CD4-positive, alpha-beta T cell (primary cell): ENCODE measurements at regions of chr21 and their contacts with region 1.

Region 1: DNA sequence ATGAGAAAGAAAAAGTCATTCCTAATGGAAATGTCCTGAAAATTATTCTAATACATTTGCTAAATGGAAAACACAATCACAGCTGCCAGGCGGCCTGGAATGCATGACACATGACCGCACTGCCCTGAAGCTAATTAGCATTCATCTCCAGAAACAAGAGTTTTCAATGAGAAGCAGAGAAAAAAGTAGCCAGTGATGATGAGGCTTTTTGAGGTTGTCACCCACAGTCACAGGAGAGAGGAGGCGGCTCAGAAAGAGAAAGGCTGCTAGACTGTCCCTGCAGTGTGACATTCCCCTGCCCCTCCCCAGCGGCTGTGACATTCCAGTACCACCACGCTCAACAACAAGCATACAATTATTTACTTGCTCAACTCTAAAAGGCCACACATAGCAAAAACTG is 122.9 kb upstream of the KRTAP19-8 start:
- DNase-seq: peak in 3 of 14 experiments; percentile 25 to 35 (median 30)
- ATAC-seq: peak; percentile 42
- H3K4me3 ChIP-seq: no peak overlapping the region
- H3K4me3 Mint-ChIP-seq: peak overlapping the region; percentile 70
- H3K27ac ChIP-seq: peak overlapping the region; percentile 30 to 72
- H3K27ac Mint-ChIP-seq: peak overlapping the region; percentile 86
- H3K4me1 ChIP-seq: peaks cover 57% of the 10 kb centered on the region
- H3K4me1 Mint-ChIP-seq: peaks cover 93% of the 10 kb centered on the region
- H3K27me3 ChIP-seq: no peaks in the 10 kb centered on the region
- H3K27me3 Mint-ChIP-seq: no peaks in the 10 kb centered on the region
- CTCF ChIP-seq: no peak

Region 2: GRCh38 chr21:31132574-31133242 is 28.4 kb before region 1 on chr21:
- CTCF ChIA-PET with region 1: interaction called, 3 read pairs
- POLR2A ChIA-PET with region 1: interaction called, 100 read pairs
- intact Hi-C with region 1: no loop called
- DNase-seq: peak; percentile 52 to 92 (median 71)
- ATAC-seq: peak; percentile 91
- H3K4me3 ChIP-seq: peak overlapping the region; percentile 35
- H3K4me3 Mint-ChIP-seq: peak overlapping the region; percentile 68
- H3K27ac ChIP-seq: peak overlapping the region in 1 of 2 donors; percentile 43
- H3K27ac Mint-ChIP-seq: peak overlapping the region; percentile 79
- H3K4me1 ChIP-seq: peaks cover 33% of the 10 kb centered on the region
- H3K4me1 Mint-ChIP-seq: peaks cover 64% of the 10 kb centered on the region
- H3K27me3 ChIP-seq: no peaks in the 10 kb centered on the region
- H3K27me3 Mint-ChIP-seq: no peaks in the 10 kb centered on the region
- CTCF ChIP-seq: no peak

Region 3: GRCh38 chr21:31142600-31142999 is 18.6 kb before region 1 on chr21:
- CTCF ChIA-PET with region 1: interaction called, 5 read pairs
- POLR2A ChIA-PET with region 1: interaction called, 100 read pairs
- intact Hi-C with region 1: loop called in 1 of 2 experiments (anchors 2 kb)
- DNase-seq: peak in 13 of 14 experiments; percentile 23 to 71 (median 48)
- ATAC-seq: peak; percentile 97
- H3K4me3 ChIP-seq: no peak overlapping the region
- H3K4me3 Mint-ChIP-seq: no peak overlapping the region
- H3K27ac ChIP-seq: no peak overlapping the region
- H3K27ac Mint-ChIP-seq: no peak overlapping the region
- H3K4me1 ChIP-seq: peaks cover 18% of the 10 kb centered on the region
- H3K4me1 Mint-ChIP-seq: peaks cover 50% of the 10 kb centered on the region
- H3K27me3 ChIP-seq: no peaks in the 10 kb centered on the region
- H3K27me3 Mint-ChIP-seq: no peaks in the 10 kb centered on the region
- CTCF ChIP-seq: peak; percentile 52

Region 4: DNA sequence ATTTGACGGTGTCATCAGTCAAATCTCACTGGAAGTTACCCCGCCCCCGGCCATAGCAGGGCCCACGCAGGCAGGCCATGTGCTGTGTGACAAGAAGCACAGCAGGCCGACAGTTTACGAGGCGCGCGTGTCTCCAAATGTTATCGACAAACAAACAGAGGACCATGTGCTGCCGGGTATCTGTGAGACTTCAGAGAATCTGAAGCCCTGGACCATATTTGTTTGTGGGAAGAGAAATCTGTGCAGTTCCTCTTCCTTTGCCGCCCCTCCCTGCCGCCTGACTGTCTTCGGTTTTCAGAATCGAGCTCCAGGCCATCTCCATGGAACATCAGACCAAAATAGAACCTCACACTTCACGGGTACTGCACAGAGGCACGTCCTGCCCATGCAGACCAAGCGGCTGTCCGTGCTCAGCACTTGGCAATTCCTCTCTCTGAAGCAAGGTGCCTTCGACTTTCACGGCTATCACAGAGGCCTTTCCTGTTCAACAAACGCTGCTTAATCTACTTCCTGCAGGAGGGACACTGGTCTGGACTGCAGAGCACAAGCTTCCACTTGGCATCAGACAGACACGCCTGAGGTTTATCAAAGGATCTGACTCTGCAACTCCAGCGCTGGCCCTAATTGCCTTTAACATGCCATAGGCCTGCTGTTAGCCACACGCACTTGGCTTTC is 12.9 kb after region 1 on chr21:
- CTCF ChIA-PET with region 1: interaction called, 11 read pairs
- POLR2A ChIA-PET with region 1: interaction called, 34 read pairs
- intact Hi-C with region 1: no loop called
- DNase-seq: peak in 12 of 14 experiments; percentile 39 to 68 (median 50)
- ATAC-seq: peak; percentile 64
- H3K4me3 ChIP-seq: peak overlapping the region; percentile 22
- H3K4me3 Mint-ChIP-seq: peak overlapping the region; percentile 81
- H3K27ac ChIP-seq: no peak overlapping the region
- H3K27ac Mint-ChIP-seq: peak overlapping the region; percentile 86
- H3K4me1 ChIP-seq: peaks cover 70% of the 10 kb centered on the region
- H3K4me1 Mint-ChIP-seq: peaks cover 92% of the 10 kb centered on the region
- H3K27me3 ChIP-seq: no peaks in the 10 kb centered on the region
- H3K27me3 Mint-ChIP-seq: no peaks in the 10 kb centered on the region
- CTCF ChIP-seq: no peak

Region 5: DNA sequence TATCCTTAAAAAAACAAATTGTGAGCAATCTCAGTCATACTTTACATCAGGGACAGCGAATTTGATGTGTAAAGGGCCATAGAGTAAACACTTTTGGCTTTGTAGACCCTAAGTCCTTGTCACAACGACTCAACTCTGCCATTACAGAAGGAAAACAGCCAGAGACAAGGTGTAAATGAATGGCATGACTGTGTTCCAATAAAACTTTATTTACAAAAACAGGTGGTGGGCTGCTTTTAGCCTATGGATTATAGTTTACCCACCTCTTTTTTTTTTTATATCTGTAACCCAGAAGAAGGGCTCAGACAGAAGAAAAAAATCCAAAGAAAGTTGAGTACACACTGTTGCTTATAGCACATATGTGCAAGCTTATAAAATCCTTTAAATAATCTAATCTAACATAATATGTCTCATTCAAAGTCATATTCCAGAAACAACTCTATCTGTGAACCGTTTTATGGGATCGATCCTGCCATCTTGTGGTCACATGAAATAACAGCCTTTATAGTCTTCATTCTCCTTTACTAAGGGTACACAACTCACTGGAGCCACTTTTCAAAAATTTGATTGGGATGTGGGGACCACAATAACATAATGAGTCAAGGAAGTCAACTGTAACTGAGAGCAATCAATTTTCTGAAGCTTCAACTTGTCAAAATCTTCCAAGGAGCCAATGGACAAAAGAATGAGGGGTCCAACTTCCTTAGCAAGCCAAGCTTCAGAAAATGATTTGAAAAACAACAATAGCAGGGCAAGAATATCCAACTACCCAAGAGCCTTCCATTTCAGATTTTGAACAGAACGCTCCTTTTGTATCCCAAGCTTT is 19.3 kb after region 1 on chr21:
- CTCF ChIA-PET with region 1: interaction called, 9 read pairs
- POLR2A ChIA-PET with region 1: interaction called, 46 read pairs
- intact Hi-C with region 1: loop called in 1 of 2 experiments (anchors 1 kb)
- DNase-seq: peak in 4 of 14 experiments; percentile 53 to 78 (median 68)
- ATAC-seq: no peak
- H3K4me3 ChIP-seq: peak overlapping the region; percentile 46
- H3K4me3 Mint-ChIP-seq: peak overlapping the region; percentile 89
- H3K27ac ChIP-seq: peak overlapping the region; percentile 39 to 89
- H3K27ac Mint-ChIP-seq: peak overlapping the region; percentile 99
- H3K4me1 ChIP-seq: peaks cover 92% of the 10 kb centered on the region
- H3K4me1 Mint-ChIP-seq: peaks cover 79% of the 10 kb centered on the region
- H3K27me3 ChIP-seq: no peaks in the 10 kb centered on the region
- H3K27me3 Mint-ChIP-seq: no peaks in the 10 kb centered on the region
- CTCF ChIP-seq: peak; percentile 65

Region 6: GRCh38 chr21:31185663-31186062 is 24.5 kb after region 1 on chr21:
- CTCF ChIA-PET with region 1: interaction called, 6 read pairs
- POLR2A ChIA-PET with region 1: interaction called, 46 read pairs
- intact Hi-C with region 1: loop called in 1 of 2 experiments (anchors 1 kb)
- DNase-seq: peak in 6 of 14 experiments; percentile 22 to 66 (median 50)
- ATAC-seq: peak; percentile 27
- H3K4me3 ChIP-seq: peak overlapping the region; percentile 56
- H3K4me3 Mint-ChIP-seq: peak overlapping the region; percentile 85
- H3K27ac ChIP-seq: peak overlapping the region; percentile 64 to 75
- H3K27ac Mint-ChIP-seq: peak overlapping the region; percentile 97
- H3K4me1 ChIP-seq: peaks cover 76% of the 10 kb centered on the region
- H3K4me1 Mint-ChIP-seq: peaks cover 85% of the 10 kb centered on the region
- H3K27me3 ChIP-seq: no peaks in the 10 kb centered on the region
- H3K27me3 Mint-ChIP-seq: no peaks in the 10 kb centered on the region
- CTCF ChIP-seq: no peak

Region 7: GRCh38 chr21:31731802-31732596 is 570.8 kb after region 1 on chr21 and contains the start of gene SCAF4:
- CTCF ChIA-PET with region 1: no interaction called
- POLR2A ChIA-PET with region 1: no interaction called
- intact Hi-C with region 1: loop called in 1 of 2 experiments (anchors 10 kb)
- DNase-seq: peak; percentile 54 to 93 (median 74)
- ATAC-seq: peak; percentile 82
- H3K4me3 ChIP-seq: peak within 1 kb of the TSS; percentile 82
- H3K4me3 Mint-ChIP-seq: peak within 1 kb of the TSS; percentile 97
- H3K27ac ChIP-seq: peak within 1 kb of the TSS; percentile 67 to 82
- H3K27ac Mint-ChIP-seq: no peak within 1 kb of the TSS
- H3K4me1 ChIP-seq: peaks cover 44% of the 10 kb centered on the region
- H3K4me1 Mint-ChIP-seq: no peaks in the 10 kb centered on the region
- H3K27me3 ChIP-seq: no peaks in the 10 kb centered on the region
- H3K27me3 Mint-ChIP-seq: no peaks in the 10 kb centered on the region
- CTCF ChIP-seq: no peak
- total RNA-seq, gene SCAF4: 56.1 to 57.8 TPM